ENCODE measurements at regions of chr1 and their contacts with region 1.

Region 1: GRCh38 chr1:202122639-202123335 is at the start of gene GPR37L1:
- DNase-seq: peak; percentile 51 to 65
- H3K4me3 ChIP-seq: no peak within 1 kb of the TSS
- H3K27ac ChIP-seq: no peak within 1 kb of the TSS
- H3K4me1 ChIP-seq: peaks cover 11% of the 10 kb centered on the region
- H3K27me3 ChIP-seq: no peaks in the 10 kb centered on the region
- CTCF ChIP-seq: peak; percentile 57
- total RNA-seq, gene GPR37L1: 0.30 and 0.33 TPM in 2 replicates

Region 2: GRCh38 chr1:201559679-201560162 is 563.1 kb before region 1 on chr1:
- CTCF ChIA-PET with region 1: no interaction called
- POLR2A ChIA-PET with region 1: no interaction called
- intact Hi-C with region 1: loop called (anchors 1 kb)
- DNase-seq: peak; percentile 53 to 73
- H3K4me3 ChIP-seq: no peak overlapping the region
- H3K27ac ChIP-seq: no peak overlapping the region
- H3K4me1 ChIP-seq: peaks cover 3% of the 10 kb centered on the region; the same call in 1 of the 2 replicates
- H3K27me3 ChIP-seq: no peaks in the 10 kb centered on the region
- CTCF ChIP-seq: peak; percentile 92

Region 3: DNA sequence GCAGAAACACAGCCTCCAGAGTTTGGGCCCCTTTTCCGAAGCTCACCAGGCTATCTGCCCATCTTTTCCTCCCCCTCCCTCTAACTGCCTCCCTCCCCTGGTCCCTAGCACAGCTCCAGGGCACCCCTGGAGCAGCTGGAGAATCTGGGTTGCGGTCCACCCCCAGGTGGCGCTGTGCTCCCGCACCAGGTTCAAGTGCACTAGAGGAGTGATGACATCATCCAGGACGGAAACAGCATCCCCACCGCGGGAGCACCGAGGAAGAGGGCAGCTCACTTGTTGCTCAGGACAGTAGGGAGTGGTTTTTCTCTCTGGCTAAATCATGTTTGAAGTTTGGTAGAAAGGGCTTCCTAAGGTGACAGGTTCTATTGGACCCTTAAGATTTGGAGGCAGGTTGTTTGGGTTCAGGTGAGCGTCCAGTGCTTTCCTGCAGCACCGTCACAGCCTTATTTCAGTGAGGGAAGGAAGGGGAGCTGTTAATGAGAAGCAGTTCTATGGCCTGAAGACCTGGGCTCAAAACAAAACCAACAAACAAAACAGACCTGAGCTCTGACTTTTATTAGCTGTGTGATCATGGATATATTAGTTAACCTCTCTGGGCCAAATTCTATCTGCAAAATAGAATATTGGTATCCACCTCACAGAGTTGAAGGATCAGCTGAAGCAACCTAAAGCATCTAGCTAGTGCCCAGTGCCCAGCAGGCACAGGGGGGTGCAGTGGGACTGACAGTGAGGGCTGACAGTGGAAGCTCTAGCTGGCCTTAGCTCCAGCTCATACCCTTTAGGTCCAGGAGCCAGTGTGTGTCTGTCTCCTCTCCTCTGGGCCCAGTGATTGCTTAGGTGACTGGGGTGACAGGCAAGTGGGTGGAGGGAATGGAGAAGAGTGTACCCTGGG is 226.6 kb before region 1 on chr1:
- CTCF ChIA-PET with region 1: no interaction called
- POLR2A ChIA-PET with region 1: no interaction called
- intact Hi-C with region 1: loop called (anchors 1 kb)
- DNase-seq: peak; percentile 75 to 89
- H3K4me3 ChIP-seq: no peak overlapping the region
- H3K27ac ChIP-seq: peak overlapping the region; percentile 61
- H3K4me1 ChIP-seq: peaks cover 29% of the 10 kb centered on the region
- H3K27me3 ChIP-seq: no peaks in the 10 kb centered on the region
- CTCF ChIP-seq: peak; percentile 98

Region 4: GRCh38 chr1:201982623-201983379 is 140.0 kb before region 1 on chr1 and contains the start of gene RNPEP:
- CTCF ChIA-PET with region 1: interaction called, 13 read pairs
- POLR2A ChIA-PET with region 1: no interaction called
- intact Hi-C with region 1: no loop called
- DNase-seq: peak; percentile 73 to 76
- H3K4me3 ChIP-seq: peak within 1 kb of the TSS; percentile 72
- H3K27ac ChIP-seq: peak within 1 kb of the TSS; percentile 16
- H3K4me1 ChIP-seq: peaks cover 14% of the 10 kb centered on the region
- H3K27me3 ChIP-seq: no peaks in the 10 kb centered on the region
- CTCF ChIP-seq: no peak; the same call in 1 of the 2 replicates
- total RNA-seq, gene RNPEP: 108 and 123 TPM in 2 replicates

Region 5: GRCh38 chr1:201999625-202000238 is 123.1 kb before region 1 on chr1:
- CTCF ChIA-PET with region 1: interaction called, 8 read pairs
- POLR2A ChIA-PET with region 1: no interaction called
- intact Hi-C with region 1: loop called (anchors 1 kb)
- DNase-seq: peak in 1 of 2 experiments; percentile 60
- H3K4me3 ChIP-seq: no peak overlapping the region
- H3K27ac ChIP-seq: no peak overlapping the region
- H3K4me1 ChIP-seq: no peaks in the 10 kb centered on the region
- H3K27me3 ChIP-seq: no peaks in the 10 kb centered on the region
- CTCF ChIP-seq: peak; percentile 89

Region 6: DNA sequence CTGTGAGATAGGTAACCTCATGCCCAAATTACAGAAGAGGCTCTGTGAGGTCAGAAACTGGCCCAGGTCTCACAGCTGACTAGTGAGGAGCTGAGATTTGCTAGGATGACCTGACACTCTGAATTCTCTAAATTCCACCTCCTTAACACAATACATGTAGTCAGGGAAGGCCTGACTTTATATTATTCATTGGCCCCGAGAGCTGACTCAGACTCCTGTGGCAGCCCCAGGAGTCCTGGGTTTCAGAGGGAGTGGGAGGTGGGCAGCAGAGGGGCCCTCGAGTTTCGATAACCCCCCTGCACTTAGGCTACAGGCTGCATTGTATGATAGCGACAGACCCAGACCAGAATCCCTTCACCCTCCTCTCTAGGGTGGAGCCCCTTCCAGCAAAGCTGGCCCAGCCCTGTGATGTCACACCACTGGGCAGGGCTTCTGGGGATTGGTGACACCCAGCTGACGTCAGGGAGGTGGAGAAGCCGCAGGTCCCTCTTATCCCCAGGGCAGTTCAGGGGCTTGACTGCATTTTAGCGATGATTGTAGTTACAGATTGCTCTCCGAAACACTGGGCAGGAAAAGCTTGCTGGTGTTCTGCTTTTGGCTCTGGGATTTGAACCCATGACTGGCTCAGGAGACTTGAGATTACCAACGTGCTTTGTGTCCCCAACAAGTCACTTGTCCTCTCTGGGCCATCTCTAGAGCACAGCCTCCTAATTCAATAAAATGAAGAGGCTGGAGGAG is 17.1 kb before region 1 on chr1:
- CTCF ChIA-PET with region 1: interaction called, 3 read pairs
- POLR2A ChIA-PET with region 1: no interaction called
- intact Hi-C with region 1: loop called (anchors 1 kb)
- DNase-seq: peak; percentile 91 to 95
- H3K4me3 ChIP-seq: peak overlapping the region; percentile 26; the same call in 1 of the 2 replicates
- H3K27ac ChIP-seq: peak overlapping the region; percentile 99
- H3K4me1 ChIP-seq: peaks cover 76% of the 10 kb centered on the region
- H3K27me3 ChIP-seq: no peaks in the 10 kb centered on the region
- CTCF ChIP-seq: no peak

Region 7: GRCh38 chr1:202135221-202135721 is 12.5 kb after region 1 on chr1:
- CTCF ChIA-PET with region 1: interaction called, 3 read pairs
- POLR2A ChIA-PET with region 1: no interaction called
- intact Hi-C with region 1: loop called (anchors 1 kb)
- DNase-seq: peak; percentile 49 to 50
- H3K4me3 ChIP-seq: no peak overlapping the region
- H3K27ac ChIP-seq: no peak overlapping the region
- H3K4me1 ChIP-seq: peaks cover 12% of the 10 kb centered on the region
- H3K27me3 ChIP-seq: no peaks in the 10 kb centered on the region
- CTCF ChIP-seq: peak; percentile 90

Measured in PC-9 (cell line).